Breast epithelium (tissue), 4 donors: ENCODE measurements at regions of chr7 and their contacts with region 1.

Region 1: GRCh38 chr7:89104748-89105685 is 309.5 kb upstream of the TEX47 start:
- DNase-seq: no peak
- H3K4me3 ChIP-seq: no peak overlapping the region
- H3K27ac ChIP-seq: no peak overlapping the region
- H3K4me1 ChIP-seq: no peaks in the 10 kb centered on the region
- H3K27me3 ChIP-seq: no peaks in the 10 kb centered on the region
- CTCF ChIP-seq: no peak
- POLR2A ChIP-seq: no peak

Region 2: DNA sequence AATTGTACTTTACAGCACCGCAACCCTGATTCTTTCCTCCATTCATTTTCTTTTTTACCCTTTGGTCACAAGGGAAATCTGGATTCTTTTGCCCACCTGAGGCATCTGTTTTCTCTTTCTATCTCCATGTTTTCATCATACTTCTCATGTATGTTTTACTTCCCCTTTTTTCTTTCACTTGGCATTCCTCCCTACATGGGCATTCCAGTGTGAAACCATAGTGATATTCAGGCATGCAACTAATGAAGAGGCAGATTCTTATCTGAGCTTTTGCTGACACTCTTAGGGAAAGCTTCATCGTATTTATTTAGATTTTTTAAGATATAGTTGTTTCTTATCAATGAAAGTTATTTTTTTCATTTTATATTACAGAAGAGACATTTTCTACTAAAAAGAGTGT is 95.7 kb after region 1 on chr7:
- intact Hi-C with region 1: loop called (anchors 10 kb)
- DNase-seq: no peak
- H3K4me3 ChIP-seq: no peak overlapping the region
- H3K27ac ChIP-seq: no peak overlapping the region
- H3K4me1 ChIP-seq: no peaks in the 10 kb centered on the region
- H3K27me3 ChIP-seq: no peaks in the 10 kb centered on the region
- CTCF ChIP-seq: no peak
- POLR2A ChIP-seq: no peak

Region 3: GRCh38 chr7:89549768-89550167 is 444.8 kb after region 1 on chr7:
- intact Hi-C with region 1: loop called (anchors 5 kb)
- DNase-seq: no peak
- H3K4me3 ChIP-seq: no peak overlapping the region
- H3K27ac ChIP-seq: no peak overlapping the region
- H3K4me1 ChIP-seq: peaks cover 0 to 9% of the 10 kb centered on the region in 2 donors
- H3K27me3 ChIP-seq: no peaks in the 10 kb centered on the region
- CTCF ChIP-seq: no peak
- POLR2A ChIP-seq: no peak